ENCODE measurements at regions of chr3 and their contacts with region 1.

Region 1: DNA sequence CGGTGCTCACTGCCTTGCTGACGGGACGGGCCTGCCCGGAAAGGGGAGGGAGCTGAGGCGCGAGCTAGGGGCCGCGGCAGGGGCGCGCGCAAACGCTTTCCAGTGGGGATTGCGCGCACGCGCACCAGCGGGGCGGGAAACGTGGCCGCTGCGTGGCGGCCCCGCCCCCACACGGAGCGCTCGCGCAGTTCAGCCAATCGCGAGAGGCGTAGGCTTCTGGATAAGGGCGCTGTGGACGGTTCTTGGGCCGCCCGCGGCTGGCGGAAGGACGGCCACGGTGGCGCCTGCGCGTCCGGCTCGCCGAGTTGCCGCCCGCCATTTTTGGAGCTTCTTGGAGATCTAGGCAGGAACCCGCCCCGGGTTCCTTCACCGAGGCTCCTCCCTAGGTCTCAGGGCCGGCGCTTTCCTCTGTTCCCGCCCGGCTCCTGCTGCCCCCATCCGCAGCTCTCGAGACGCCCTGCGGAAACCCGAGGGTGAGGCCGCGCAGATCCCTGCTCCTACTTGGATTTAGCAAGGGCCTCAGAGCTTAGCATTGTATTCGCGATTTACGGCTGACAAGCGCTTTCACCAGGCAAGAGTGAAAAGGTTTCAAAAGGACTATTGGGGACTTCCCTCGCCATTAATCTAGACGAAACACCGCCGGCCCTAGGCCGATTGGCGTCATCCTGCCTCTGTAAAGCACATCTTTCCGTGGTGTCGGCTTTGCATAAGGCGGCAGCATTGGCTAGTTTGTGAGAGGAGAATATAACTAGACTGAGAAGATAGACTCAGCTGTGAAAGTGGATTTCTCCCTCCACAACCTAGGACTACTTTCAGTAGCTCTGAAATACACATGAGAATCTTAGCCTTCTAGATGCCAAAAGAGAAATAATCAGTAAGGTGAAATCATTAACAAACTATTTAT is 496 bp upstream of the STAG1 start:
- DNase-seq: peak; percentile 94
- CTCF ChIP-seq: peak; percentile 37

Region 2: DNA sequence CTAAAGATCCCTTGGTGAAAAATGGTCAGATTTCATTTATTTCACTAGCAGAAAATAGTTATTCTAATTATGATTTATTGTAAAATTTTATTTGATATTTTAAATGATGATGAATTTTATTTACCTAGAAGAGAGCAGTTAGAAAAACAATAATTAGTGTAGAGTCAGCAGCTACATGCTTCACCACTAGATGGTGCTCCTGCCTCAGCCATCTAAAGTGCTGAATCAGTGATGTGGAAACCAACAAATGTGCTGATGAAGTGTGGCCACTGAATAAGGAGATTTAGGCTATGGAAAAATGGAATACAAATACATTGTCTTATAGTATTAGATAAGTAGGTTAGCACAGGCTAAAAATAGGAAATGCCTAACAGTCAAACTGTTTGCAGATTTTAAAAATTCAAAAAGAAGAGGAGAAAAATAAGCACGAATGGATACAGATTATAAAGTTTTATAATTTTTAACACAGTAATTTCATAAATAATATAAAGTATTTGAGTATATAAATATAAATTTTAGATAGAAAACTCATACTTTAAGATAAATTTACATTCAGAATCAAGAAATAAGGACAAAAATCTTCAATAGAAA is 677.4 kb before region 1 on chr3:
- in situ Hi-C with region 1: loop called (anchors 10 kb)
- DNase-seq: peak; percentile 51
- CTCF ChIP-seq: peak; percentile 89

Region 3: GRCh38 chr3:136093771-136094170 is 658.9 kb before region 1 on chr3:
- in situ Hi-C with region 1: loop called (anchors 10 kb)
- DNase-seq: no peak
- CTCF ChIP-seq: no peak

Region 4: GRCh38 chr3:137020315-137020714 is 267.6 kb after region 1 on chr3:
- in situ Hi-C with region 1: loop called (anchors 5 kb)
- DNase-seq: no peak
- CTCF ChIP-seq: no peak

Region 5: GRCh38 chr3:137150825-137151224 is 398.2 kb after region 1 on chr3:
- in situ Hi-C with region 1: no loop called
- DNase-seq: no peak
- CTCF ChIP-seq: no peak